ENCODE measurements at regions of chr7 and their contacts with region 1.

Region 1: GRCh38 chr7:5665094-5666025 is 116.1 kb downstream of the RNF216 start:
- DNase-seq: peak; percentile 84
- H3K4me3 ChIP-seq: no peak overlapping the region
- H3K27ac ChIP-seq: peak overlapping the region; percentile 12
- H3K4me1 ChIP-seq: peaks cover 37% of the 10 kb centered on the region
- H3K27me3 ChIP-seq: no peaks in the 10 kb centered on the region
- CTCF ChIP-seq: peak; percentile 78 to 81
- POLR2A ChIP-seq: no peak

Region 2: DNA sequence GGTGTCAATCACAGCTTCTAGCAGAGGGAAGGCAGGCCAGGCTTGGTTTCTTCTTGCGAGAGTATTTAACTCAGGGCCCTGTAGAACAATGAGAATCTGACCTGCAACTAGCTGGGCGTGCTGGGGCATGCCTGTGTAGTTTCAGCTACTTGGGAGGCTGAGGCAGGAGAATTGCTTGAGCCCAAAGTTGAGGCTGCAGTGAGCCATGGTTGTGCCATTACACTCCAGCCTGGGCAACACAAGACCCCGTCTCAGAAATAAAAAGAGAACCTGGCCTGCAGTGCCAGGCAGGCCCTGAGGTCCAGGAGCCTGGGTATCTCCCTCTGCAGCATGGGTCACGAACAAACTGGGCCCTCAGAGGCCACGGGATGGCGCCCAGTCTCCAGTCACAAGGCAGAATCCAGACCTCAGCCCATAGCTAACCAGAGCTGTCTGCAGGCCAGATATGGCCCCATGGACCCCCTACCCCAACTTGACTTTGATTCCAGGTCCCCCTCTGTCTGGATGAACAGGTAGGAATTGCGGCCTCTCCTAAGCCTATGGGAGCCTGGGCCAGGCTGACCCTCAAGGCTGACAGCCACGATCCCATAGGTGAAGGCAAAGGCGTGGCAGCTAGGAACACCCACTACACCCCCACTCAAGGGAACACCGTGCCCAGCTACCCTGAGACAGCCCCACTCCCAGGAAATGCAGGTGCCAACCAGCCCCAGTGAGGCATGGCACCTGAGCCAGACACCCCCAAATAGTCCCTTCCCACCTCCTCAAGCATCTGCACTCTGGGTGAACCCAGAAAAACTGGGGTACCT is 139.1 kb before region 1 on chr7:
- CTCF ChIA-PET with region 1: interaction called, 7 read pairs
- POLR2A ChIA-PET with region 1: interaction called, 15 read pairs
- dilution Hi-C with region 1: no loop called
- intact Hi-C with region 1: no loop called
- DNase-seq: peak; percentile 34
- H3K4me3 ChIP-seq: no peak overlapping the region
- H3K27ac ChIP-seq: no peak overlapping the region
- H3K4me1 ChIP-seq: peaks cover 3% of the 10 kb centered on the region
- H3K27me3 ChIP-seq: no peaks in the 10 kb centered on the region
- CTCF ChIP-seq: no peak
- POLR2A ChIP-seq: peak; percentile 69

Region 3: DNA sequence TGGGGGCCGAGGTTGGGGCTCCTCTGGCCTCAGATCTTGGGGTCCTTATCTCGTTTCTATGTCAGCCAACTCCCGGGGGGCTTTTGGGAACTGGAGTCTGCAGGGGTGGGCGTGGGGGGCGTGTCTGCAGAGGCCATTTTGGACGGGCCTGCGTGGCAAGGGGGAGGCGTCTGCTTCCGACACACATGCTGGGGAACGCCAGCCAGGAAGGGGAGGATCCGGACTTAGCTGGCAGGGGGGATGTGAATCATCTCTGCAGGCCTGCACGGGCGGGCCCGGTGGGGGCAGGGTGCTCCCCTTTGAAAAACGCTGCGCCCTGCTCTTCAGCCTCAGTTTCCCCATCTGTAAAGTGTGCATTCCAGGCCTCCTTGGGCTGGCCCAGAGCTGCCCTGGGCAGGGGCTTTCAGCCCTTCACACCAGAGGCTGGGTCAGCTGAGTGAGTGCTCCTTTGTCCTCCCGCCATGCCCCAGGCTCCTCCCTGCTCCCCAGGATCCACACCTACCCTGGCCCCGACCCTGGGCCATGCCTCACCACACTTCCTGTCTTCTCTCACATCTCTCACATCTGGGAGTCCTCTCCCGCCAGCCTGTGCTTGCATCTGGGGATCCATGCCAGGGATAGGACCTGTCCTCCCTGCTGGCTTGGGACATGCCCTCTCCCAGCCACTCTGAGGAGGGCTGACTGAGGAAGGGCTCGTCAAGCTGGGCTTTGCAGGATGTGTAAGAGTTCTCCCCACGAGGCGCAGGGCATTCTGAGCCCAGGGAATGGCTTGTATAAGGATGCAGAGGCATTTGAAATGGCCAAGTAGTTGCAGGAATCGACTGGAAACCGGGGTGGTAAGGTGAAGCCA is 69.1 kb before region 1 on chr7:
- CTCF ChIA-PET with region 1: no interaction called
- POLR2A ChIA-PET with region 1: no interaction called
- dilution Hi-C with region 1: no loop called
- intact Hi-C with region 1: loop called (anchors 1 kb)
- DNase-seq: peak; percentile 88
- H3K4me3 ChIP-seq: peak overlapping the region; percentile 20 to 93 (median 85)
- H3K27ac ChIP-seq: peak overlapping the region; percentile 72
- H3K4me1 ChIP-seq: peaks cover 41% of the 10 kb centered on the region
- H3K27me3 ChIP-seq: no peaks in the 10 kb centered on the region
- CTCF ChIP-seq: no peak
- POLR2A ChIP-seq: peak; percentile 82

Region 4: GRCh38 chr7:5620459-5620881 is 44.9 kb before region 1 on chr7:
- CTCF ChIA-PET with region 1: interaction called, 29 read pairs
- POLR2A ChIA-PET with region 1: no interaction called
- dilution Hi-C with region 1: no loop called
- intact Hi-C with region 1: no loop called
- DNase-seq: no peak
- H3K4me3 ChIP-seq: no peak overlapping the region
- H3K27ac ChIP-seq: no peak overlapping the region
- H3K4me1 ChIP-seq: no peaks in the 10 kb centered on the region
- H3K27me3 ChIP-seq: no peaks in the 10 kb centered on the region
- CTCF ChIP-seq: no peak
- POLR2A ChIP-seq: no peak

Region 5: GRCh38 chr7:5646852-5647251 is 18.5 kb before region 1 on chr7:
- CTCF ChIA-PET with region 1: interaction called, 19 read pairs
- POLR2A ChIA-PET with region 1: no interaction called
- dilution Hi-C with region 1: no loop called
- intact Hi-C with region 1: loop called (anchors 1 kb)
- DNase-seq: no peak
- H3K4me3 ChIP-seq: no peak overlapping the region
- H3K27ac ChIP-seq: no peak overlapping the region
- H3K4me1 ChIP-seq: peaks cover 25% of the 10 kb centered on the region
- H3K27me3 ChIP-seq: no peaks in the 10 kb centered on the region
- CTCF ChIP-seq: no peak
- POLR2A ChIP-seq: no peak

Region 6: DNA sequence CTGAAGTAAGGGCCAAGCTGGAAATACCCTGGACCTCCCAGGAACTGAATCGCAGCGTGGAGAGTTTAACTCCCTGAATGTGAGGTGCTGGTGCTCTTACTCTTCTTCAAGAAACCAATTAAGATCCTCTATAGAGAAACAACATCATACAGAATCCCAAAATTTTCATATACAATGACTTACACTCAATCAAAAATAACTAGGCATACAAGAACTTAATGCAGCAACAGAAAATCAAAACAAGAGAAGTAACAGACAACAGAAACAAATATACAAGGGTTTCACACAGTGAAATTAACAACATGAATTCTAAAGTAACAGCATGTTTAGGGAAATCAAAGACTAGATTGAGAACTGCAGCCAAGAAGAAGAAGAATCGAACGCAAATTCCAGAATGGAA is 78.4 kb after region 1 on chr7:
- CTCF ChIA-PET with region 1: no interaction called
- POLR2A ChIA-PET with region 1: no interaction called
- dilution Hi-C with region 1: no loop called
- intact Hi-C with region 1: no loop called
- DNase-seq: no peak
- H3K4me3 ChIP-seq: no peak overlapping the region
- H3K27ac ChIP-seq: no peak overlapping the region
- H3K4me1 ChIP-seq: no peaks in the 10 kb centered on the region
- H3K27me3 ChIP-seq: no peaks in the 10 kb centered on the region
- CTCF ChIP-seq: no peak
- POLR2A ChIP-seq: no peak

Measured in endothelial cell of umbilical vein (primary cell).